Vagina (tissue), 2 donors: ENCODE measurements at regions of chr1 and their contacts with region 1.

Region 1: DNA sequence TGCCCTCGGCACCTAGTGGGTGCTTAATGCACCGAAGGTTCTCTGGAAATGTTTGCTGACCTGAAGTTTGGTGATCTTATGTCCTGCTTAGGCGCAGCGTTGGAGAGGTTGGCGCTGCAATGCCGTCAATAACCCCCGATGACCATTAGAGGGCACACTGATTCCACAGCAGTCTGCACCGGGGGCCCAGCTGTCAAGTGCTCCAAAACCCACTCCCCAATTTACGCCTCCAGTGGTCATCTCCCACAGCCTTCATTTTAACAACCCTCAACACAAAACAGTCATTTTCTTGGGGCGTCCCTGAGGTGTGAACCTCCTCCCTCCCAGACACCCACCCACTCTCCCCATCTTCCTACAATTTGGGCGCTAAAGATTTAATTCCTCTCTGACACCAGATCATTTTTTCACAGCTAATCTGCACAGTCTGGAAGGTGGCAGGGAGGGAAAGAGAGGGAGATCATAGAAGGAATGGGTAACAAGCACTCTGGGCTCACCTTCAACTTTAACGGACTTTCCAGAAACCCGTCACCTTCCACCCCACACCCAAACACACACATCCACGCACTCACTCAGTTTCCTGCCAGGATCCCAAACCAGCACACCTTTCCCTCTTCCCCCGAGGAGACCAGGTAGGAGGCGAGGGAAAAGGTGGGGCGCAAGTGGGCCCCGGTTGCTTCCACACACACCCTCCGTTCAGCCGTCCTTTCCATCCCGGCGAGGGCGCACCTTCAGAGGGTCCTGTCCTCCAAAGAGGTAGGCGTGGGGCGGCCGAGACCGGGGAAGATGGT is 576 bp upstream of the NPR1 start:
- DNase-seq: no peak
- H3K4me3 ChIP-seq: peak overlapping the region; percentile 63 to 64
- H3K27ac ChIP-seq: peak overlapping the region; percentile 73
- H3K4me1 ChIP-seq: peaks cover 21% of the 10 kb centered on the region
- H3K27me3 ChIP-seq: no peaks in the 10 kb centered on the region
- CTCF ChIP-seq: peak; percentile 57 to 77 (median 77)
- POLR2A ChIP-seq: no peak

Region 2: DNA sequence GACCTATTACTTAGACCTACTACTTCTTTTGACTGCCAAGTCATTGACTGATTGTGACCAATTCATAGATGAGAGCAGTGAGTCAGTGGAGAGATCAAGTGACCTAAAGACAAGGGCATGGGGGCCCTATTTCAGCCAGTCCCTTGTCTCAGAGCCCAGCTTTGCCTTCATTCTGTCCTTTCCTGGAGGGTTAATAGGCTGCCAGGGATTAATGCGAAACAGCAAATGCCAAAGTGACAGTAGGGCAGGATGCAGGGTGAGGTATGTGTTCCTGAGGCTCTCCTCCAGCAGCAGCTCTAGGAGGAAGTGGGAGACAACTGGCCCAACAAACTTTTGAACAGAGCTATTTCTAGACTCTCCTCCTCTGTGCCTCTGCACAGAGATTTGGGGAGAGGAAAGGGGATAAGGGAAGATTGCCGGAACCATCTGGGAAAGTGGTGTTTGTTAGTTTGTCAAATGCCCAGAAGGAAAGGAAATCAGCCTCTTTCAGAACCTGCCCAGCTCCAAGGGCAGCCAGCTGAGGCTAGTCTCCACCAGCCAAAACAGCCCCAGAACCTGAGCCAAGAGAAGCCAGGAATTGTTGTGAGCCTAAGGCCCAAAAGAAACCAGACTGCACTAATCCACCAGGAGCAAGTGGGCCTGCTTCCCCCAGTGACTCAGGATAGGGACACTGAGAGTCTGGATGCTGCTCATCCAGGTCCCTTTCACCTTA is 123.9 kb before region 1 on chr1:
- intact Hi-C with region 1: no loop called
- DNase-seq: peak in 1 of 2 donors; percentile 85
- H3K4me3 ChIP-seq: no peak overlapping the region
- H3K27ac ChIP-seq: peak overlapping the region; percentile 54
- H3K4me1 ChIP-seq: peaks cover 48% of the 10 kb centered on the region
- H3K27me3 ChIP-seq: no peaks in the 10 kb centered on the region
- CTCF ChIP-seq: no peak
- POLR2A ChIP-seq: no peak

Region 3: GRCh38 chr1:153749408-153750005 is 71.6 kb after region 1 on chr1:
- intact Hi-C with region 1: loop called (anchors 5 kb)
- DNase-seq: peak in 1 of 2 donors; percentile 94
- H3K4me3 ChIP-seq: no peak overlapping the region
- H3K27ac ChIP-seq: peak overlapping the region; percentile 76
- H3K4me1 ChIP-seq: peaks cover 31% of the 10 kb centered on the region
- H3K27me3 ChIP-seq: no peaks in the 10 kb centered on the region
- CTCF ChIP-seq: peak; percentile 78 to 94 (median 79)
- POLR2A ChIP-seq: no peak

Region 4: DNA sequence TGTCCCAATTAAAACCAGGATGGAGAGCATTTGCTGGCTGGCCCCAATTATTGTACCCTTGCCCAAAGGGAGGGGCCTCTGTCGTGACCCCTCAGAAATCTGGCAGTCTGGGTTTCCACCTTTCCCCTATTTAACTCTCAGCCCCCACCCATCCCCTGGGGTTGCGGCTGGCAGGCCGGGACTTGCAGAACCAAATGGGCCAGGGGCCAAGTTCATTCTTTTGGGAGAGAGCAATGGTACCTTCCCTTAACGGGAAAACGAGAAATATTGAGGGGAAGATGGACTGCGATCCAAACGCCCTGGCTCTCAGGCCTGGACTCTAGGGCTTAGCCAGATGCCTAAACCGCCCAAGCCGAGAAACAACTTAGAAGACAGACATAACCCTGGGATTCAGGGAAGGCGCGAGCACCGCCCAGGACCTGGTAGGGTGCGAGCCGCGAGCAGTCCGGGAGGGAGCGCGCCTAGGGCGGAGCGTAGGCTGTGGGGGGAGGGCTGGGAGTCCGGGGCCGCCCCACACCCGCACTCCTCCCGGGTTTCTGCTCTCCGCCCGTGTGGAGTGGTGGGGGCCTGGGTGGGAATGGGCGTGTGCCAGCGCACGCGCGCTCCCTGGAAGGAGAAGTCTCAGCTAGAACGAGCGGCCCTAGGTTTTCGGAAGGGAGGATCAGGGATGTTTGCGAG is 97.0 kb after region 1 on chr1 and contains the start of gene SLC27A3:
- intact Hi-C with region 1: loop called (anchors 5 kb)
- DNase-seq: no peak
- H3K4me3 ChIP-seq: peak within 1 kb of the TSS; percentile 69 to 78
- H3K27ac ChIP-seq: peak within 1 kb of the TSS; percentile 91
- H3K4me1 ChIP-seq: peaks cover 57% of the 10 kb centered on the region
- H3K27me3 ChIP-seq: no peaks in the 10 kb centered on the region
- CTCF ChIP-seq: no peak
- POLR2A ChIP-seq: no peak
- total RNA-seq, gene SLC27A3: 31.4 TPM

Region 5: DNA sequence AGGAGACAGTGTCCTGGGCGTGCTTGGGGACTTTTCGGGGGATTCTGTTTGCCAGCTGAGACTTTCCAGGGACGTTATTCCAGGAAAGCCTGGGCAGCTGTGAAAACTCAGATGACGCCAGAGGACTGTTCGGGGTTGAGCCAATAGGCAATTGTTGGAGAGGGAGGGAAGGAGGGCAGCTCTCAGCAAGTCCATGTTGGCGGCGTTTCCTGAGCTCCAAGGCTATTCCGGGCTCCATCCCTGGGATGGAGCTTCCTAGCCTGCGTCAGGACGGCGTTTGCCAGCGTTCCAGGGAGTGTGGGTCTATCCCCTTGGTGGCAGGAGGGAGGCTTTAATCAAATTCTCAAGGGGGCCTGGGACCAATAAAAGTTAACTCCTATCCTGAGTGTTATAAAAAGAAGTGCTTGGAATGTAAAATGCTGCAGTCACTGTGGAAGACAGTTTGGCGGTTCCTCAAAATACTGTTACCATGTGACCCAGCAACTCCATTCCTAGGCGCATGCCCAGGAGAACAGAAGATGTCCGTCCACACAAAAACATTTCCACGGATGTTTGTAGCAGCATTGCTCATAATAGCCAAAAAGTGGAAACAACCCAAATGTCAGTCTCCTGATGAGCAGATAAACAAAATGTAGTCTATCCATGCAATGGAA is 112.5 kb after region 1 on chr1:
- intact Hi-C with region 1: no loop called
- DNase-seq: peak in 1 of 2 donors; percentile 98
- H3K4me3 ChIP-seq: peak overlapping the region; percentile 32 to 34
- H3K27ac ChIP-seq: peak overlapping the region; percentile 95
- H3K4me1 ChIP-seq: peaks cover 16% of the 10 kb centered on the region
- H3K27me3 ChIP-seq: no peaks in the 10 kb centered on the region
- CTCF ChIP-seq: no peak
- POLR2A ChIP-seq: peak in 1 of 2 donors; percentile 15